Body of pancreas (tissue), 4 donors: ENCODE measurements at regions of chr7 and their contacts with region 1.

Region 1: DNA sequence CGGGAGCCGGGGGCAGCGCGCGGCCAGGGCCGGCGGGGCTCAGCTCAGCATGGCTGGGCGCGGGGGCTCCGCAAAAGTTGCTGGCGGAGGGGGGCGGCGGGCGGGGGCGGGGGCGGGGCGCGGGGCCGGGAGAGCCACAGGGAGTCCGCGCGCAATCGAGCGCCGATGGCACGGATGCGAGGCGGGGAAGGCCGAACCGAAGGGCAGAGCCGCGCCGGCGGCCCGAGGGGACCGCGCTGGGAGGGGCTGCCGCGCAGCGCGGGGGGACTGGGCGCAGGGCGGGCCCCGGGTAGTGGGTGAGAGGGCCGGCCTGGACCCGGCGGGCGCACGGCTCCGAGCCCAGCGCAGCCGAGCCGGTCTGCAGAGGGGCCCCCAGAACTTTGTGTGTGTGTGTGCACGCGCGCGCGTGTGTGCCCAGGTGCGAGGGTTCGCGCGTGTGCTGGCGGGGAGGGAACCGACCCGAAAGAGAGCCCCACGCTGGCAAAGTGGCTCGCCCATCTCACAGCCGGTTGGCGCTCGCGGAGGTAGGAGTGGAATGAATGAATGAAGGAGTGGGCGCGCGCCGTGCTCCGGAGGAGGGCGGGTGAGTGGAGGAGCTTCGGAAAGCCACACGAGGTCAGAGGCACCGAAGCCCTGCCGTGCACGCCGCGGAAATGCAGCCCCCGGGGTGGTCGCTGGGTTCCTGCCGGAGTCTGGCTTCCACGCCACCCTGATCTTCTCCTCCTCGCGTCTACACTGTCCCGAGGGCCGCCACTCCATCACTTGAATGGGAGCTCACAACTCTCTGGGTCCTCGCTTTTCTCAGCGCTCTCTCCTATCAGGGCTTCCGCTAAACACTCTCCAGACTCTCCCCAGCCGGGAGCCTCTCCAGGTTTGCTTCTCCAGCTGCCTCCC is at the start of gene HIPK2:
- DNase-seq: peak; percentile 73 to 87 (median 78)
- ATAC-seq: peak; percentile 79
- H3K4me3 ChIP-seq: peak within 1 kb of the TSS; percentile 65 to 71
- H3K27ac ChIP-seq: peak within 1 kb of the TSS; percentile 90 to 97 (median 94)
- H3K4me1 ChIP-seq: peaks cover 30% of the 10 kb centered on the region
- H3K27me3 ChIP-seq: no peaks in the 10 kb centered on the region
- CTCF ChIP-seq: no peak
- POLR2A ChIP-seq: no peak
- total RNA-seq, gene HIPK2: 22.1 to 26.4 TPM

Region 2: GRCh38 chr7:139645572-139646523 is 132.3 kb before region 1 on chr7:
- intact Hi-C with region 1: loop called (anchors 10 kb)
- DNase-seq: peak; percentile 88 to 89 (median 88)
- ATAC-seq: peak; percentile 81
- H3K4me3 ChIP-seq: no peak overlapping the region
- H3K27ac ChIP-seq: no peak overlapping the region
- H3K4me1 ChIP-seq: peaks cover 38% of the 10 kb centered on the region
- H3K27me3 ChIP-seq: no peaks in the 10 kb centered on the region
- CTCF ChIP-seq: peak; percentile 85 to 93 (median 91)
- POLR2A ChIP-seq: no peak

Region 3: DNA sequence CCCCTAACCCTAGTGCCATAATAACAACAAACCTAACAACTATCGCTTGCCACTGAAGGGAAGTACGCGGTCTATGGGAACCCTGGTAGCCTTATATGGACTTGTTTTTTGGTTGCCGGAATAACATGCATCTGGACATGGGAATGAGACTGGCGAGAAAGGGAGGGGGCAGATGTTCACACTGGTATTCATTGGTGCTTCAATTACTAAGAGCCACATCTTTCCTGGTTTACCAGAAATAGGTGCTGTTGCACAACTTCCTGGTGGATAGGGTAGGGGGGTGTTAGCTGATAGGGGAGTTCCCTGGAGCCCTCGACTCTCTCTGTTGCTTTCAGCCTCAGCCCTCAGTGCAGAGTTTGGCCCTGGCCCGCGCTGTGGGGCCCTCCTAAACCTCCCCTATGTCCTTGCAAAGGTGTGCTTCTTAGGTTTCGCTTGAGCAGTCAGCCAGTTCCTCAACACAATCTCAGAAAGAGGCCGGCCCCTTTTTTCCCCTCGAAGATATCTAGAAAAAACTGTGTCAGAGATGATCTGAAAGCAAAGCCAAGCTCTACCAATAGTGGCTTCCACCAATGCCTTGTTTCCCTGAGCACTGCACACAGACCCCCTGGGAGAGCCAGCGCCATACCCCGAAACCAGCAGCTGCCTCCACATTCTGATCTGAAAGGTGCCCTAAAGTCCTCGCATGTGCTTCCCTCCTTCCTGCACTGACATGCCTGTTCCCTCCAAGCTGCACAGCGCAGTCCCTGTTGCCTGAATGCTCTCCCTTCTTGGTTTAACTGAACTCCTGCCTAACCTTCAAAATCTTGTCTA is 64.4 kb after region 1 on chr7:
- intact Hi-C with region 1: no loop called
- DNase-seq: no peak
- ATAC-seq: no peak
- H3K4me3 ChIP-seq: no peak overlapping the region
- H3K27ac ChIP-seq: no peak overlapping the region
- H3K4me1 ChIP-seq: peaks cover 10% of the 10 kb centered on the region
- H3K27me3 ChIP-seq: no peaks in the 10 kb centered on the region
- CTCF ChIP-seq: no peak
- POLR2A ChIP-seq: no peak